Left cardiac atrium (tissue), 4 donors: ENCODE measurements at regions of chr1 and their contacts with region 1.

Region 1: DNA sequence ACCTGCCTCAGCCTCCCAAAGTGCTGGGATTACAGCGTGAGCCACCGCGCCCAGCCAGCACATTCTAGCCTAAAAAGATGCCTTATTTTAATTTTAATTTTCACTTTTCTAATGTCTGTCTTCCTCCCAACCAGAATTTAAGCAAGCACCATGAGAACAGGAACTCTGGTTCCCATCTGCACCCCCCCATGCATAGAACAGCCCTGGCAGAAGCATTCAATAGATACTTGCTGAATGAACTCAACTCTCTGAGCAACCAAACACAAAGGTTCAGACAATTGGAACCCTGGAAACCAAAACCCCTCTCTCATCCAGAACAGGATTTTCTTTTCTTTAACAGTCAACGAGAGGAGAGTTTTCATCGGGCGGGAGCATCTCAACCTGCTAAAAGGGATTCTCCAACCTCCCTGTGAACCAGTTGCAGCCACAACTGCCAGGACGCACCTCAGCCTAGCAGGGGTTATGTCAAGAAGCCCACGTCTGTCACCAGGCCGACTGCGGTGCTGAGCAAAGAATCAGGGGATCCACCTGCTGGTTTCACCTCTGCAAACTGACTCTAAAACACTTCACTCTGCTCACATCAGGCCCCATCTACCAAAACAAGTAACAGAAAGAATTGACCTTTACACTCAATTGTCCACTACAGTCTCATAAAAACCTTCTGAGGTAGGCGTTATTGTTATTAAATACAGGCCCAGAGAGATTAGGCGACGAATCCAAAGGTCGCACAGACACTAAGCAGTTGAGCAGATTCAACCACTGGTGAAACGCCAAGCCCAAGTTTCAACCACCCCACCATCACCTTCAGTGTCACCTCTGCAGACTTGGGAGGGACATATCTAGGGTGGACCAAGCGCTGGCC is 1.7 kb downstream of the KIAA2013 start:
- DNase-seq: no peak
- ATAC-seq: no peak

Region 2: GRCh38 chr1:11967028-11967547 is 42.5 kb after region 1 on chr1:
- intact Hi-C with region 1: loop called in 1 of 2 experiments (anchors 5 kb)
- DNase-seq: no peak
- ATAC-seq: peak; percentile 18 to 72